ENCODE measurements at regions of chr14 and their contacts with region 1.

Region 1: DNA sequence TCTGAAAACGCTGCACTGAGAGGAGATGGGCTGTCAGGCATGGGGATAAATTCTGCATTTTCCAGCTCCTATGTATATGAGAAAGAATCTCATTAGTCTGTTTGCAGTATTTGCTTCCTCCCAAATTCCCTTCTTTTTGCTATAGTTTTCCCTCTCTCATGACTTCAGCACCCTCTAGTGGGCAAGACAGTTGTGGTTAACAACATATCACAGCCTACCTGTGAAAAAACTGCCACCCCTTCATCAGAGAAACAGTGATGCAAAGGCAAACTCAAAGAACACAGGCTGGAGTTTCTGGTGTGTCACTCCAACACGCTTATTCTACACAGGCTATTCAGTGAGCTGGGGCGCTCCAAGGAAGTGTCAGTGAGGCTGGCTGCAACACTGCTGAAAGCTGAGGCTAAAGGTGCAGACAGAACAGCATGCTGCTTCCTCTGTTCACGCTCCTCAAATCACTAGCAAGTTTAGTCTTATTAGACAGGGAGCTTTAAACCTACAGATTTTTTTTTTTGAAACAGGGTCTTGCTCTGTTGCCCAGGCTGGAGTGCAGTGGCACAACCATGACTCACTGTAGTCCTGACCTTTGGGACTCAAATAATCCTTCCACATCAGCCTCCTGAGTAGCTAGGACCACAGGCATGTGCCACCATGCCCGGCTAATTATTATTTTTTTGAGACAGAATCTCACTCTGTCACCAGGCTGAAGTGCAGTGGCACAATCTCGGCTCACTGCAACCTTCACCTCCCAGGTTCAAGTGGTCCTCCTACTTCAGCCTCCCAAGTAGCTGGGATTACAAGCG is 19.3 kb downstream of the ZC2HC1C start:
- DNase-seq: peak in 10 of 14 experiments; percentile 8 to 71 (median 31)
- ATAC-seq: peak; percentile 72
- H3K4me3 ChIP-seq: no peak overlapping the region
- H3K4me3 Mint-ChIP-seq: no peak overlapping the region
- H3K27ac ChIP-seq: no peak overlapping the region
- H3K27ac Mint-ChIP-seq: no peak overlapping the region
- H3K4me1 ChIP-seq: no peaks in the 10 kb centered on the region
- H3K4me1 Mint-ChIP-seq: no peaks in the 10 kb centered on the region
- H3K27me3 ChIP-seq: no peaks in the 10 kb centered on the region
- H3K27me3 Mint-ChIP-seq: no peaks in the 10 kb centered on the region
- CTCF ChIP-seq: peak; percentile 84

Region 2: GRCh38 chr14:74913986-74914573 is 174.7 kb before region 1 on chr14:
- CTCF ChIA-PET with region 1: no interaction called
- POLR2A ChIA-PET with region 1: interaction called, 5 read pairs
- intact Hi-C with region 1: loop called (anchors 1 to 2 kb)
- DNase-seq: peak in 3 of 14 experiments; percentile 19 to 29 (median 25)
- ATAC-seq: no peak
- H3K4me3 ChIP-seq: no peak overlapping the region
- H3K4me3 Mint-ChIP-seq: no peak overlapping the region
- H3K27ac ChIP-seq: no peak overlapping the region
- H3K27ac Mint-ChIP-seq: no peak overlapping the region
- H3K4me1 ChIP-seq: no peaks in the 10 kb centered on the region
- H3K4me1 Mint-ChIP-seq: no peaks in the 10 kb centered on the region
- H3K27me3 ChIP-seq: no peaks in the 10 kb centered on the region
- H3K27me3 Mint-ChIP-seq: no peaks in the 10 kb centered on the region
- CTCF ChIP-seq: peak; percentile 31

Region 3: DNA sequence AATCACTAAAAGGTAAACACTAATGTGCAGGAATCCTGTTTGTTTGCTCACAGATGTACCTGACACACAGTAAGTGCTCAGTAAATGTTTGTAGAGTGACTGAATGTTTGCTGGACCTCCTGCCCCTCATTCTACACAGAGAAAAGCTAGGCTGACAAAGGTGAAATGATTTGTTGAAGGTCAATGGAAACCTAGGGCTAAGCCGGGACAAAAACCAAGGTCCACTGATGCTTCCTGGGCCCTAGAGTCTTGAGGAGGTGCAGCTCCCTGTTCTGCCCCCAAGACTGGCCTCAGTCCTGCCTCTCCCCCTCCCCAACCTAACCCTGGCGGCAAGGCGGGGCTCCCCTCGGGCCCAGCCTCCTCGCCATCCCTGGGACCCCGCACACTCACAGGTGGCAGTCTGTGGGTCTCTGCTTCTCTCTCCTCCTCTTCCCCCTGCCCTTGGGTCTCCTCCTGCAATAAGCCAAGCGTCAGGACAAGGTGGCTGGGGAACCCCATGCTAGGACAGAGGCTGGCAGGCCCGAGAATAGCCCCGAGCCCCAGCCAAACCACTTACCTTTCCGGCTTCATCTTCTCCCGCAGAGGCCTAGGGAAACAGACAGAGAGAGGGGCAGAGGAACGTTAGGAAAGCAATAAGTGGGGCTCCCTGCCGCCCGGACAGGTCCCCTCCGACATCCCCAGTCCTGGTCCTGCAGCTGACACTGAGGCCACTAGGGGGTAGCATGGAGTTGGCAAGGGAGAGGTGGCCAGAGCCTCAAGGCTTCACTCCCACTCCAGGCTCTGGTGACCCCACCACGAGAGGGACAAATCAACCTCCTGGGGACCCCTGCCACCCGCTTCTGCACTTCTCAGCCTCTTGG is 142.7 kb before region 1 on chr14:
- CTCF ChIA-PET with region 1: interaction called, 15 read pairs
- POLR2A ChIA-PET with region 1: interaction called, 3 read pairs
- intact Hi-C with region 1: loop called (anchors 1 kb)
- DNase-seq: peak; percentile 57 to 84 (median 68)
- ATAC-seq: peak; percentile 71
- H3K4me3 ChIP-seq: no peak overlapping the region
- H3K4me3 Mint-ChIP-seq: peak overlapping the region; percentile 46
- H3K27ac ChIP-seq: no peak overlapping the region
- H3K27ac Mint-ChIP-seq: peak overlapping the region; percentile 52
- H3K4me1 ChIP-seq: peaks cover 32% of the 10 kb centered on the region
- H3K4me1 Mint-ChIP-seq: peaks cover 33% of the 10 kb centered on the region
- H3K27me3 ChIP-seq: no peaks in the 10 kb centered on the region
- H3K27me3 Mint-ChIP-seq: peaks cover 7% of the 10 kb centered on the region
- CTCF ChIP-seq: peak; percentile 92